Mucosa of descending colon (tissue), 3 donors: ENCODE measurements at regions of chr3 and their contacts with region 1.

Region 1: DNA sequence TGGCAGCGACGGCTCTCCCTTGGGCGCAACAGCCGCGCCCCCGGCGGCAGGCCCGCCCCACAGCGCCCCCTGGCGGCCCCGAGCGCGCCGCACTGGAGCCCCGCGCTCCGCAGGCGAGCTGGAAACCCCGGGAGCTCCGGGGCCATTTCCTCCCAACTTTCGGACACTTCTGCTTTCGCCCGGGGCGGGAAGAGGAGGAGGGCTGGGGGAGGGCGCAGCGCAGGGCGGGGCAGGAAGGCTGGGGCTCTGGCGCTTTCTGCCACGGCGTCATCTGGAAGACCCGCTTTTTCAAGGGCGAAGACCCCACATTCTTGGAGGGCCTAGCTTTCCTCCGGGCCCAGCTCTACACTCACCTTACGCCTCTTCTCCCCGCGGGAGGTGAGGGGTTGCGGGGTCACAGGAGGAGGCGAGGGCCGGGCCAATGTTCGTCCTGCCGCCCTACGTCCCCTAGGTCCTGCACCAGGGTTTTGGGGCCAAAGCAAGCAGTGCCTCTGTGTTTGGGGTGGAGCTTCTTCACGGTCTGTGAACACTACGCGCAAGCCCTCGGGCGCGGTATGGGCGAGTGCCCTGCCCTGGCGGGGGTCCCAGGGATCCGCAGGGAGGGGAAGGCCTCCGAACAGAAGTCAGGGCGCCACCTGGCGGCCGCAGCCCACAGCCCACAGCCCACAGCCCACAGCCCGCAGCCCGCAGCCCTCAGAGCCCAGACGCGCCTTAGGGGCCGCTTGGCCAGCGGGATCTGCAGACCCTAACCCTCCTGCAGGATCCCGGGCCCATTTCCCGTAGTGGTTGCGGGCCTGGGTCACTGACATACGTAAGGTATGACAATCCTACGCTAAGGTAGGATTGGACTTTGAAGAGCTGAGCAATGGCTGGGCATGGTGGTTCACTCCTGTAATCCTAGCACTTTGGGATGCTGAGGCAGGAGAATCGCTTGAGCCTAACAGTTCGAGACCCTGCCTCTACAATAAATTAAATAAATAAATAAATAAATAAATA is 31.1 kb downstream of the FOXL2 start:
- DNase-seq: peak; percentile 94 to 97 (median 95)
- ATAC-seq: peak; percentile 93
- H3K4me3 ChIP-seq: peak overlapping the region; percentile 44
- H3K4me1 ChIP-seq: peaks cover 8% of the 10 kb centered on the region
- CTCF ChIP-seq: peak; percentile 95

Region 2: GRCh38 chr3:137509355-137510045 is 1406.3 kb before region 1 on chr3:
- intact Hi-C with region 1: no loop called
- DNase-seq: peak in 1 of 3 donors; percentile 32
- ATAC-seq: no peak
- H3K4me3 ChIP-seq: no peak overlapping the region
- H3K4me1 ChIP-seq: no peaks in the 10 kb centered on the region
- CTCF ChIP-seq: no peak

Region 3: DNA sequence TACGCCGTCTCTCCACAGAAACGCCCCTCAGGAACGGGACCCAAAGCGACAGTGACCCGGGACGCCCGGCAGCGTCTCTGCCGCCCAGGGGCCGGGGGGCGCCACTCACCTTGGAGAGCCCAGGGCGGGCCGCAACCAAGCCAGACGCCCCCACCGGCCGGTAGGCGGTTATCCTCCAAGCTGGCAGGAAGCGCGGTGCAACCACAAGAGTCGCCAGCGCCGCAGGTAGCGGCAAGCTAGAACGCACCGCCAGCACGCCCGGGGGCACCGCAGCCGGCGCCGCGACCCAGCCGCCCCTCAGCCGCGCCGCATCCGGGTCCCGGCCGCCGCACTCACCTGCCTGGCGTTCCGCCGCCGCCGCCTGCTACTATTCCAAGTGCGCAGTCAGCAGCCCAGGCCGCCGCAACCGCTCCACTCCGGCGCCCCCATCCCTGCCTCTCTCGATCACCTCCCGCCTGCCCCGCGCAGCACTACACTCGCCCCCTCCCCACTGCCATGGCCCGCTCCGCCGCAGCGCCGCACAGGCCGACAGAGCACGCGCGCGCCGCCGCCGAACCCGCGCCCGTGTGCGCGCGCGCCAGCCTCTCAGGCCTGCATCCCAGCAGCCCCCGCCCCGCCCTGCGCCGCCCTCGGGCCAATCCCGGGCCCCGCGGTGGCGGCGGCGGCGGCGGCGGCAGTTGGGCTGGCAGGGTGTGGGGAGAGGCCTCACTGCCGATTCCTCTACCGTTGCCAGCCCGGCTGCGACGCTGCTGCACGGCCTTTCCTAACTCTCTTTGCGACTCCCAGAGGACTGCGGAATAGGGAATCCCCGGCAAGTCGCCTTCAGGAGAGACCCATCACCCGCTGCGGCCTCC is 81.2 kb before region 1 on chr3 and contains the start of gene PIK3CB:
- intact Hi-C with region 1: loop called in 1 of 2 experiments (anchors 10 kb)
- DNase-seq: peak; percentile 93 to 95 (median 94)
- ATAC-seq: peak; percentile 96
- H3K4me3 ChIP-seq: peak within 1 kb of the TSS; percentile 86
- H3K4me1 ChIP-seq: peaks cover 16% of the 10 kb centered on the region
- CTCF ChIP-seq: no peak
- total RNA-seq, gene PIK3CB: 44.3 to 57.9 (median 51.8) TPM

Region 4: GRCh38 chr3:138960417-138960852 is 44.6 kb after region 1 on chr3:
- intact Hi-C with region 1: no loop called
- DNase-seq: no peak
- ATAC-seq: no peak
- H3K4me3 ChIP-seq: no peak overlapping the region
- H3K4me1 ChIP-seq: no peaks in the 10 kb centered on the region
- CTCF ChIP-seq: no peak

Region 5: GRCh38 chr3:139032326-139033002 is 116.7 kb after region 1 on chr3:
- intact Hi-C with region 1: no loop called
- DNase-seq: peak in 1 of 3 donors; percentile 31
- ATAC-seq: peak; percentile 97
- H3K4me3 ChIP-seq: no peak overlapping the region
- H3K4me1 ChIP-seq: no peaks in the 10 kb centered on the region
- CTCF ChIP-seq: no peak